CD4-positive, alpha-beta T cell (primary cell): ENCODE measurements at regions of chr5 and their contacts with region 1.

Region 1: GRCh38 chr5:174418928-174419796 is 305.2 kb upstream of the MSX2 start:
- DNase-seq: peak; percentile 64 to 85 (median 72)
- ATAC-seq: peak; percentile 74
- H3K4me3 ChIP-seq: peak overlapping the region; percentile 28
- H3K4me3 Mint-ChIP-seq: peak overlapping the region; percentile 74
- H3K27ac ChIP-seq: no peak overlapping the region
- H3K27ac Mint-ChIP-seq: no peak overlapping the region
- H3K4me1 ChIP-seq: peaks cover 12% of the 10 kb centered on the region
- H3K4me1 Mint-ChIP-seq: peaks cover 14% of the 10 kb centered on the region
- H3K27me3 ChIP-seq: peaks cover 0 to 6% of the 10 kb centered on the region in 2 experiments
- H3K27me3 Mint-ChIP-seq: peaks cover 38% of the 10 kb centered on the region
- CTCF ChIP-seq: peak; percentile 63

Region 2: GRCh38 chr5:174436781-174437201 is 17.6 kb after region 1 on chr5:
- CTCF ChIA-PET with region 1: no interaction called
- POLR2A ChIA-PET with region 1: no interaction called
- intact Hi-C with region 1: no loop called
- DNase-seq: no peak
- ATAC-seq: no peak
- H3K4me3 ChIP-seq: no peak overlapping the region
- H3K4me3 Mint-ChIP-seq: no peak overlapping the region
- H3K27ac ChIP-seq: no peak overlapping the region
- H3K27ac Mint-ChIP-seq: no peak overlapping the region
- H3K4me1 ChIP-seq: peaks cover 3% of the 10 kb centered on the region
- H3K4me1 Mint-ChIP-seq: no peaks in the 10 kb centered on the region
- H3K27me3 ChIP-seq: peaks cover 0 to 4% of the 10 kb centered on the region in 2 experiments
- H3K27me3 Mint-ChIP-seq: no peaks in the 10 kb centered on the region
- CTCF ChIP-seq: no peak

Region 3: GRCh38 chr5:174464504-174465165 is 45.5 kb after region 1 on chr5:
- CTCF ChIA-PET with region 1: interaction called, 4 read pairs
- POLR2A ChIA-PET with region 1: interaction called, 3 read pairs
- intact Hi-C with region 1: loop called in 1 of 2 experiments (anchors 2 kb)
- DNase-seq: no peak
- ATAC-seq: no peak
- H3K4me3 ChIP-seq: no peak overlapping the region
- H3K4me3 Mint-ChIP-seq: no peak overlapping the region
- H3K27ac ChIP-seq: no peak overlapping the region
- H3K27ac Mint-ChIP-seq: no peak overlapping the region
- H3K4me1 ChIP-seq: peaks cover 6% of the 10 kb centered on the region
- H3K4me1 Mint-ChIP-seq: peaks cover 13% of the 10 kb centered on the region
- H3K27me3 ChIP-seq: no peaks in the 10 kb centered on the region
- H3K27me3 Mint-ChIP-seq: peaks cover 6% of the 10 kb centered on the region
- CTCF ChIP-seq: no peak

Region 4: GRCh38 chr5:174482607-174483101 is 63.5 kb after region 1 on chr5:
- CTCF ChIA-PET with region 1: no interaction called
- POLR2A ChIA-PET with region 1: no interaction called
- intact Hi-C with region 1: no loop called
- DNase-seq: no peak
- ATAC-seq: no peak
- H3K4me3 ChIP-seq: no peak overlapping the region
- H3K4me3 Mint-ChIP-seq: no peak overlapping the region
- H3K27ac ChIP-seq: no peak overlapping the region
- H3K27ac Mint-ChIP-seq: no peak overlapping the region
- H3K4me1 ChIP-seq: no peaks in the 10 kb centered on the region
- H3K4me1 Mint-ChIP-seq: no peaks in the 10 kb centered on the region
- H3K27me3 ChIP-seq: peaks cover 0 to 4% of the 10 kb centered on the region in 2 experiments
- H3K27me3 Mint-ChIP-seq: peaks cover 21% of the 10 kb centered on the region
- CTCF ChIP-seq: no peak

Region 5: DNA sequence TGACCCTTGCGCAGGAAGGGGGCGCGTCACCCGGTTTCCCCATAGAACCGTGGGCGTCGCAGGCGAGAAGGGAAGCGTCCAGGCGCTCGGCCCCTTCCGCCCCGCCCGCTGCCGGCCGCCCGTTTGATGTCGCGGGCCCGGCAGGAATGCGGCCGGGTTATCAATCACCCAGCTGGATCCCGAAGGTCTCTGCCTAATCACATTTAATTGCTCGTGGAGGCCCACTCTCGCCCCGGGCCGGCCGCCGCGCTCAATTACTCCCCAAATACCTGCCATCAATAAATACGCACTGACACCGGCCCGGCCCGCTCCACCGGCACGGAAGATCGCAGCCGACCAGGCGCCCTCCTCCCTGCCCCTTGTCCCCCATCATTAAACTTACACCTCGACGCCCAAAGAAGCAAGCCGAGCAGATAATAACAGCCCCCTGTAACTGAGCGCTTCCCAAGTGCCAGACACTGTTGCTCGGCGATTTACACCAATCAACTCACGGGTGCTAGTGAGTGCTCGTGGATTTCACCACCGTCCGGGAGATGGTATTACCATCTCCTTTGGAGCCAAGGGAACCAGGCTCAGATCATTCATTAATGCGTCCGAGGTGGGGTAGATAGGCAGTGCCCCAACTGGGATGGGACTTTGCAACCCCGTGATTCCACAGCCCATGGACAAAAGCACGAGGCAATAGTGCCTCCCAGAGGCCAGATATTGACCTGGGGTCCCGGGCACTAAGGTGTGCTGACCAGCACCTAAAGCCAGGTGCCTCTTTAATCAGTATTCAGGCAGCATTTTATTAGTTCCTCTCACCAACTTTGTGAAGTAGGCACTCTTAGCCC is 316.6 kb after region 1 on chr5:
- CTCF ChIA-PET with region 1: no interaction called
- POLR2A ChIA-PET with region 1: no interaction called
- intact Hi-C with region 1: loop called in 1 of 2 experiments (anchors 1 kb)
- DNase-seq: peak in 1 of 14 experiments; percentile 5
- ATAC-seq: no peak
- H3K4me3 ChIP-seq: no peak overlapping the region
- H3K4me3 Mint-ChIP-seq: no peak overlapping the region
- H3K27ac ChIP-seq: no peak overlapping the region
- H3K27ac Mint-ChIP-seq: no peak overlapping the region
- H3K4me1 ChIP-seq: no peaks in the 10 kb centered on the region
- H3K4me1 Mint-ChIP-seq: no peaks in the 10 kb centered on the region
- H3K27me3 ChIP-seq: peaks cover 56 to 71% of the 10 kb centered on the region in 2 experiments
- H3K27me3 Mint-ChIP-seq: peaks cover 87% of the 10 kb centered on the region
- CTCF ChIP-seq: no peak

Region 6: DNA sequence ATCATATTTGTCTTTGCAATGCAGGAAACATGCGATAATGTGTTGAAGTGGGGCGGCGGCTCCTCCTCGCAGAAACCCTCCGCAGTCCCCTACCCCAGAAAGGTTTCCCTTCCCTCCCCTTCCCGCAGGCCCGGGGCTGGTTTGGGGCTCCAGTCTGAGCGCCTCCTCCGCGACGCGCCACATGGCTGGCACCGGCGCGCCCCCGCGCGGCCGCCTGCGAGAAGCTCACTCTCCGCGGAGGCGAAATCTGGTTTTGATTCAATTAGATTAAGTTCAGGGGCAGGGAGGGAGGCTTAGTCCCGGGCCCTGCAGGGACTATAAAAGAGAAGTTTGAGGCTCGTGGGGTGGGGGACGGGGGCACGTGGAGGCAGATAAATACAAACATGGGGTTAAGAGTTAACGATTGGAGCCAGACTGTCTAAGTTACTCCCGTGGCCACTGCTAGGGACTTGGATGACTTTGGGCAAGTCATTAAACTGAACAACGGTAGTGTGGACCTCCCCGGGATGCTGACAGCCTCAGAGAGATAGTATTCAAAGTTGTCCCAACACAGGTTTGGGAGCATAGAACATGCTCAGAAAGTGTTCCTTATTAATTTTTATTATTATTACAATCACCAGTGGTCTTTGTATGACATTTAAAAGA is 374.6 kb after region 1 on chr5:
- CTCF ChIA-PET with region 1: interaction called, 10 read pairs
- POLR2A ChIA-PET with region 1: no interaction called
- intact Hi-C with region 1: loop called in 1 of 2 experiments (anchors 2 kb)
- DNase-seq: peak; percentile 2 to 55 (median 17)
- ATAC-seq: peak; percentile 44
- H3K4me3 ChIP-seq: no peak overlapping the region
- H3K4me3 Mint-ChIP-seq: no peak overlapping the region
- H3K27ac ChIP-seq: no peak overlapping the region
- H3K27ac Mint-ChIP-seq: no peak overlapping the region
- H3K4me1 ChIP-seq: peaks cover 4% of the 10 kb centered on the region
- H3K4me1 Mint-ChIP-seq: peaks cover 7% of the 10 kb centered on the region
- H3K27me3 ChIP-seq: peaks cover 6 to 35% of the 10 kb centered on the region in 2 experiments
- H3K27me3 Mint-ChIP-seq: peaks cover 83% of the 10 kb centered on the region
- CTCF ChIP-seq: peak; percentile 36

Region 7: DNA sequence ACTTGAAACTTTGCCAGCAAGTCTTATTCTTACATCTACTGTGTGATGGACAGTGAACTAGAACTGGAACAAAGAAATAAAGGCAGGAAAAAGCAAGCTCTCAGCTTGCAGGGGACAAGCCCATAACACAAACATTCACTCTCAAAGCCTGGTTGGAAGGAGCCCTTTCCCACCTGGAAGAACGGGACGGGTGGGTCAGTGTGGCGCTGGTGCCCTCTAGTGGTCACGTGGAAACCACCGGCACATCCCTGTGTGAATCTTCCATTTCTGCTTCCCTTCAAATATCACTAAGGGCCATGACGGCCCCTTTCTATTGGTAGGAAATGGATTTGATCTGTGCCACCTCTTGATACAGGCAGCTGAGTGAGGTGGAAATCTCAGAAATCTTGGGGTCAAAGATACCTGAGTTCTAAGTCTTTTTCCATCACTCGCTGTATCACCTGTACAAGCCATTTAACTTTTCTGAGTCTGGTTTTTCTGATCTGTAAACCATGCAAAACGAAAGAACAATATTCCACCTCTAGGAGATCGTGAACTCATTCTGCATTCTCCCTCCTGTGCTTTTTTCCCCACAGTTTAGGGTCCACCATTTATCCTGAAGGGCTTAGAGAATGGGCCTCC is 516.8 kb after region 1 on chr5:
- CTCF ChIA-PET with region 1: no interaction called
- POLR2A ChIA-PET with region 1: no interaction called
- intact Hi-C with region 1: loop called in 1 of 2 experiments (anchors 2 kb)
- DNase-seq: peak; percentile 3 to 48 (median 16)
- ATAC-seq: no peak
- H3K4me3 ChIP-seq: no peak overlapping the region
- H3K4me3 Mint-ChIP-seq: no peak overlapping the region
- H3K27ac ChIP-seq: no peak overlapping the region
- H3K27ac Mint-ChIP-seq: no peak overlapping the region
- H3K4me1 ChIP-seq: no peaks in the 10 kb centered on the region
- H3K4me1 Mint-ChIP-seq: no peaks in the 10 kb centered on the region
- H3K27me3 ChIP-seq: peaks cover 2 to 4% of the 10 kb centered on the region in 2 experiments
- H3K27me3 Mint-ChIP-seq: peaks cover 33% of the 10 kb centered on the region
- CTCF ChIP-seq: peak; percentile 79